Endothelial cell of umbilical vein (primary cell): ENCODE measurements at regions of chr3 and their contacts with region 1.

Region 1: GRCh38 chr3:150408221-150409102 is at the start of gene TSC22D2:
- DNase-seq: peak; percentile 95
- H3K4me3 ChIP-seq: peak within 1 kb of the TSS; percentile 51 to 99 (median 80)
- H3K27ac ChIP-seq: peak within 1 kb of the TSS; percentile 100
- H3K4me1 ChIP-seq: peaks cover 14% of the 10 kb centered on the region
- H3K27me3 ChIP-seq: no peaks in the 10 kb centered on the region
- CTCF ChIP-seq: no peak
- POLR2A ChIP-seq: peak; percentile 79
- total RNA-seq, gene TSC22D2: 43.9 and 50.9 TPM in 2 replicates

Region 2: GRCh38 chr3:150202711-150203110 is 205.8 kb before region 1 on chr3:
- CTCF ChIA-PET with region 1: no interaction called
- POLR2A ChIA-PET with region 1: no interaction called
- dilution Hi-C with region 1: no loop called
- intact Hi-C with region 1: no loop called
- DNase-seq: no peak
- H3K4me3 ChIP-seq: no peak overlapping the region
- H3K27ac ChIP-seq: no peak overlapping the region
- H3K4me1 ChIP-seq: no peaks in the 10 kb centered on the region
- H3K27me3 ChIP-seq: peaks cover 38 to 39% of the 10 kb centered on the region in 2 experiments
- CTCF ChIP-seq: no peak
- POLR2A ChIP-seq: no peak

Region 3: GRCh38 chr3:150232992-150233451 is 175.4 kb before region 1 on chr3:
- CTCF ChIA-PET with region 1: interaction called, 76 read pairs
- POLR2A ChIA-PET with region 1: interaction called, 20 read pairs
- dilution Hi-C with region 1: loop called (anchors 25 kb)
- intact Hi-C with region 1: loop called (anchors 1 kb)
- DNase-seq: peak; percentile 95
- H3K4me3 ChIP-seq: no peak overlapping the region
- H3K27ac ChIP-seq: peak overlapping the region; percentile 76
- H3K4me1 ChIP-seq: peaks cover 33% of the 10 kb centered on the region
- H3K27me3 ChIP-seq: no peaks in the 10 kb centered on the region
- CTCF ChIP-seq: no peak
- POLR2A ChIP-seq: peak; percentile 21

Region 4: DNA sequence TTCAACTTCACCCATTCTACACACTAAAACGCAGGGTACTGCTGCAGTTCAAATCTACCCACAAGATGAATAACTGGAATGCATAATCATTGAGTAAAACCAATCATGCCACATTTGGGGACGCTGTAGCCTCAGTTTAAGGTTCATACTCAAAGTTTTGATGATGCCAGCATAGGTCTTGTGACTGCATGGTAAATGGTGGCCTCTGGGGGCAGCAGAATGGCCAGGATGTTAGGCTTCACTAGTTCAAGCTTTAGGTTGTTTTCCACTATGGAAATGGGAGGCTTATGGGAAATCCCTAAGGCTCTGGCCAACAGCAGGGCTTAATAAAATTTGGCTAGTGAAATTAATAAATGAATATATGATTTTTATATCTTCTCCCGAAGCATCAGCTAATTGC is 104.7 kb before region 1 on chr3:
- CTCF ChIA-PET with region 1: interaction called, 6 read pairs
- POLR2A ChIA-PET with region 1: interaction called, 3 read pairs
- dilution Hi-C with region 1: no loop called
- intact Hi-C with region 1: loop called (anchors 1 kb)
- DNase-seq: no peak
- H3K4me3 ChIP-seq: no peak overlapping the region
- H3K27ac ChIP-seq: no peak overlapping the region
- H3K4me1 ChIP-seq: peaks cover 39% of the 10 kb centered on the region
- H3K27me3 ChIP-seq: no peaks in the 10 kb centered on the region
- CTCF ChIP-seq: peak; percentile 17 to 18
- POLR2A ChIP-seq: no peak

Region 5: DNA sequence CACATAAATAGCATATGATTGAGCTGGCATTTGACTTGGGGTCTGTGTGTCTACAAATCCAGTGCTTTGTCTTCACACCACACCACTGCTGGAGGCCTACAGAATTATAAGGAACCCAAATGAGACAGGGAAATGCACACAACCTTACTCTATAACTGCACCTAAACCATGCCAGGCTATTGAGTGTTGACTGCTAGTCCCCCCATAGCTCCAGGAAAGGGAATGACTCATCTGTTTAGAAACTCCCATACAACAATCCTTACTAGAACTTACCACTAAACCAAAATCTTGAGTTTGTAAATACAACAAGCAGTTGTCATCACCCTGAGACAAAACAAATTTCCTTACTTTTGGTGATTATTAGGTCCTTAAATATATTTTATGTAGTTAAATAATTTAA is 17.3 kb before region 1 on chr3:
- CTCF ChIA-PET with region 1: interaction called, 12 read pairs
- POLR2A ChIA-PET with region 1: interaction called, 8 read pairs
- dilution Hi-C with region 1: no loop called
- intact Hi-C with region 1: loop called (anchors 2 kb)
- DNase-seq: peak; percentile 55
- H3K4me3 ChIP-seq: no peak overlapping the region
- H3K27ac ChIP-seq: no peak overlapping the region
- H3K4me1 ChIP-seq: peaks cover 26% of the 10 kb centered on the region
- H3K27me3 ChIP-seq: no peaks in the 10 kb centered on the region
- CTCF ChIP-seq: no peak
- POLR2A ChIP-seq: no peak

Region 6: DNA sequence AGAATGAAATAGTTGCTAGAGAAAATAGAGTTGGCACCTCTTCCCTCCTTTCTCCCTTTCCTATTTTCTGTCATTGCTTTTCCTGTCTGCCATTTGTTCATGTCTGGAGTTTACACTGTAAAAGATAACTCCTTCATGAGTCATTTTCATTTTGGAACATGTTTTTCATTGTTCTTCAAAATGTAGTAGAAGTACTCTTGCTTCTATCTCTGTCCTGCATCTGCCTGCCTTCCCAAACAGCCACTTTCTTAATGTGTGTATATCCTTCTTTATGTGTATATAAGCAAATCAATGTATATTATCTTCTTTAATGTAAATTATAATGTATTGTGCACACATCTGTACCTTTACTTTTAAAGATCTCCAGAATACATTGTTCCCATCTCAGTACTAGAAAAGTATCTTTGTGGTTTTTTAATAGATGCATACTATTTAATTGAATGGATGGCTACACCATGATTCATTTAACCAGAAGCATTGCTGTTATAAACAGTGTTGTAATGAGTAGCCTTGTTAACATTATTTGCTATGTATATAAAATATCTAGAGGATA is 40.8 kb after region 1 on chr3:
- CTCF ChIA-PET with region 1: no interaction called
- POLR2A ChIA-PET with region 1: no interaction called
- dilution Hi-C with region 1: no loop called
- intact Hi-C with region 1: loop called (anchors 1 kb)
- DNase-seq: peak; percentile 87
- H3K4me3 ChIP-seq: peak overlapping the region in 1 of 3 experiments; percentile 30
- H3K27ac ChIP-seq: peak overlapping the region; percentile 84
- H3K4me1 ChIP-seq: peaks cover 54% of the 10 kb centered on the region
- H3K27me3 ChIP-seq: no peaks in the 10 kb centered on the region
- CTCF ChIP-seq: no peak
- POLR2A ChIP-seq: no peak

Region 7: GRCh38 chr3:150546226-150547044 is 138.0 kb after region 1 on chr3 and contains the starts of genes EIF2A and SERP1:
- CTCF ChIA-PET with region 1: interaction called, 10 read pairs
- POLR2A ChIA-PET with region 1: interaction called, 3 read pairs
- dilution Hi-C with region 1: no loop called
- intact Hi-C with region 1: loop called (anchors 1 kb)
- DNase-seq: peak; percentile 100
- H3K4me3 ChIP-seq: peak within 1 kb of the TSS; percentile 80 to 98 (median 93)
- H3K27ac ChIP-seq: peak within 1 kb of the TSS; percentile 97
- H3K4me1 ChIP-seq: peaks cover 25% of the 10 kb centered on the region
- H3K27me3 ChIP-seq: no peaks in the 10 kb centered on the region
- CTCF ChIP-seq: no peak
- POLR2A ChIP-seq: peak; percentile 85
- total RNA-seq, gene EIF2A: 97.6 and 104 TPM in 2 replicates
- total RNA-seq, gene SERP1: 81.7 and 82.0 TPM in 2 replicates

Region 8: GRCh38 chr3:151197981-151198767 is 789.7 kb after region 1 on chr3:
- CTCF ChIA-PET with region 1: no interaction called
- POLR2A ChIA-PET with region 1: no interaction called
- dilution Hi-C with region 1: no loop called
- intact Hi-C with region 1: no loop called
- DNase-seq: no peak
- H3K4me3 ChIP-seq: no peak overlapping the region
- H3K27ac ChIP-seq: no peak overlapping the region
- H3K4me1 ChIP-seq: no peaks in the 10 kb centered on the region
- H3K27me3 ChIP-seq: no peaks in the 10 kb centered on the region
- CTCF ChIP-seq: no peak
- POLR2A ChIP-seq: no peak